Mammary epithelial cell (primary cell): ENCODE measurements at regions of chr16 and their contacts with region 1.

Region 1: DNA sequence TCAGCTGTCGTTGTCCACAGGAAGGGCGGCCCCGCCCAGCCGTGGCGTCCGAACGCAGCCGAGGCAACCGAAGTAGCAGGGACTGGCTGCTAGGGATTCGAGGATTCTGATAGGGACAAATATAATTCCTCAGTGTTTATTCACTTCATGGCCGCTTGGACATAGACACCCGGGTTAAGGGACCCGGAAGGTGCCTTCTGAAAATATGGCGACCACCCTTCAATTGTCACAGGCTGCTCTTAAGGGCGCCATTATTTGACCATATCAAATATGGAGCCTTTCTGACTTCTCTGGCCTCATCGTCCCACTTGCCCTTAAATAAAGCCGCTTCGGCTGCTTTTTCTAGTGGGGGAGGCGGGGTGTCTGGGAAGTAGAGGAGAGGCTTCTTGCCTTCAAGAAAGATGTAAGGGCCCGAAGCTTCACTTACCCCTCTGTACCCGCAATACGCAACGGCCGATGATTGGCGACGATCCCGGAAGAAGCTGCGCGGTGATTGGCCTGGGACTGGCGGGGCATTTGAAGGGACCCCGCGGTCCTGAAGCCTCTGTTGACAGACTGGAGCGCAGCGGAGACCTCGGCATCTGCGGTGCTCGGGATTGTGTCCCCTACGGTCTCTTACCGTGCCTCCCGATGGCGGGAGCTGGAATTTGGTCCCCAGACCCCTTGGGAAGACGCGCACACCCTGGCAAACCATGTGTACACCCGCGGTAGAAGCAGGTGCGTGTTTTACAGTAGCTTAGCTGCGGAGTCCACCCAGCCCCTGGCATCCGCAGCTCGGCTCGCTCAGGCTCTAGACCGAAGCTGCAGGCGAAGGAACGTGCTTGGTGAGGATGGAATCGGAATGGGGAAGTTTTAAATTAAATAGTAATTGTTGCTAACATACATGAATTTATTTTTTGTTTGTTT is at the start of gene ZNF688:
- DNase-seq: peak; percentile 94
- H3K4me3 ChIP-seq: peak within 1 kb of the TSS; percentile 55 to 85 (median 75)
- H3K27ac ChIP-seq: peak within 1 kb of the TSS; percentile 70
- H3K4me1 ChIP-seq: peaks cover 35% of the 10 kb centered on the region
- H3K27me3 ChIP-seq: no peaks in the 10 kb centered on the region
- CTCF ChIP-seq: no peak
- total RNA-seq, gene ZNF688: 6.2 to 10.6 TPM

Region 2: GRCh38 chr16:30534368-30535105 is 37.4 kb before region 1 on chr16 and contains the start of gene ZNF747:
- CTCF ChIA-PET with region 1: no interaction called
- dilution Hi-C with region 1: no loop called
- in situ Hi-C with region 1: no loop called
- intact Hi-C with region 1: loop called (anchors 2 kb)
- DNase-seq: peak; percentile 75
- H3K4me3 ChIP-seq: peak within 1 kb of the TSS; percentile 50 to 64 (median 57)
- H3K27ac ChIP-seq: peak within 1 kb of the TSS; percentile 71
- H3K4me1 ChIP-seq: peaks cover 15% of the 10 kb centered on the region
- H3K27me3 ChIP-seq: no peaks in the 10 kb centered on the region
- CTCF ChIP-seq: peak in 1 of 2 donors; percentile 7
- total RNA-seq, gene ZNF747: 6.7 to 11.0 TPM

Region 3: GRCh38 chr16:30585400-30586189 is 13.6 kb after region 1 on chr16 and contains the start of gene ZNF785:
- CTCF ChIA-PET with region 1: no interaction called
- dilution Hi-C with region 1: no loop called
- in situ Hi-C with region 1: no loop called
- intact Hi-C with region 1: loop called (anchors 2 kb)
- DNase-seq: peak; percentile 99
- H3K4me3 ChIP-seq: peak within 1 kb of the TSS; percentile 39 to 69 (median 58)
- H3K27ac ChIP-seq: peak within 1 kb of the TSS; percentile 42
- H3K4me1 ChIP-seq: peaks cover 9% of the 10 kb centered on the region
- H3K27me3 ChIP-seq: no peaks in the 10 kb centered on the region
- CTCF ChIP-seq: peak in 1 of 2 donors; percentile 30
- total RNA-seq, gene ZNF785: 7.6 to 8.0 TPM

Region 4: DNA sequence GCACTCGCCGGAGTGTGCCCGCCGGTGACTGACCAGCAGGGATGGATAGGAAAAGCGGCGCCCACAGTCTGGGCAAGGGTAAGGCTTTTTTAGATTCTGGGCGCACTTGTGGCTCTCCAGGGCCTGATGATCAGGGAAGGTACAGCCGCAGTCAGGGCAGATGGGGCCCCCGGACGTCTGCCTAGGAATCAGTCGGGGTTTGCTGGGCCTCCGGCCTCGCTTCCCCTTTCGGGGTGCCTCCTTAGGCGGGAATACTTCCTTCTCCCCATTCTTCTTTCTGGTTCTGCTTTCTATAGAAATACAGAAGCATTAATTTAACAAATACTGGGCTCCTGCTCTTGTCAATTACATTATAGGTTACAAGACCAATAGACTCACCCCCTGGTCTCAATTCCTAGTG is 33.2 kb after region 1 on chr16:
- CTCF ChIA-PET with region 1: no interaction called
- dilution Hi-C with region 1: no loop called
- in situ Hi-C with region 1: no loop called
- intact Hi-C with region 1: no loop called
- DNase-seq: no peak
- H3K4me3 ChIP-seq: no peak overlapping the region
- H3K27ac ChIP-seq: no peak overlapping the region
- H3K4me1 ChIP-seq: peaks cover 10% of the 10 kb centered on the region
- H3K27me3 ChIP-seq: no peaks in the 10 kb centered on the region
- CTCF ChIP-seq: no peak

Region 5: DNA sequence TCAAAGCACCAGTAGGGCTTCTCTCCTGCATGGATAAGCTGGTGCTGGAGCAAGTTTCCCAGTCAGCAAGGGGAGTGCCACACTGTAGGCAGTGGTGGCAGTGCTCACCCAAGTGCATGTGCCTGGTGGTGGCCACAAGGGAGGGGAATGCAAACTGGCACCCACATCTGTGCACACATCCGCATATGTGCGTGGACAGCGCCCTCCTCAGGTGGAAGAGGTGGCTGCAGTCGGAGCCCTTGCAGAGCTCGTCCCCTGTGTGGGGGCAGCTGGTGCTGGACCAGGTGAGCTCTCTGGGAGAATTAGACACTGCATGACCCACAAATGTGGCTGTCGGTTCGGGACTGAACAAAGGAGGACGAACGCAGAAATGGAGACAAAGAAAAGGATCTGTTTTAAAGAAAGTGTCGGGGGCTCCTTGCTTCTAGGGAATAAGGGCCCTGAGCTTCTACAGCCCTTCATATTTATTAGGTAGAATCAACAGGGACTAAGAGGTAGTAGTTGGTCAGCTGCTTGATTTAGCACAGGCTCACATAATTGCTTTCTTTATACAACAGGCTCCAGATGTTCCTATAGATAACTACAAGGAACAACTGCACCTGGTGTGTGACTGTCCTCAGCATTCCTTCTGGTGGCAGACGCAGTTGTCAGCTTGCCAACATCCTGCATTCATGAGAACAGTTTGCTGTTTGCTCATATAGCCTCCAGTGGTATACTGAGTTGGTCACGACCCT is 43.6 kb after region 1 on chr16:
- CTCF ChIA-PET with region 1: no interaction called
- dilution Hi-C with region 1: loop called (anchors 5 kb)
- in situ Hi-C with region 1: no loop called
- intact Hi-C with region 1: no loop called
- DNase-seq: no peak
- H3K4me3 ChIP-seq: no peak overlapping the region
- H3K27ac ChIP-seq: no peak overlapping the region
- H3K4me1 ChIP-seq: peaks cover under 1% of the 10 kb centered on the region
- H3K27me3 ChIP-seq: no peaks in the 10 kb centered on the region
- CTCF ChIP-seq: peak; percentile 36 to 47